B cell (primary cell): ENCODE measurements at regions of chr1 and their contacts with region 1.

Region 1: GRCh38 chr1:109906160-109906838 is 4.3 kb upstream of the CSF1 start:
- DNase-seq: peak; percentile 84
- ATAC-seq: peak; percentile 89
- H3K4me3 ChIP-seq: peak overlapping the region in 2 of 5 experiments; percentile 17 to 19
- H3K4me3 Mint-ChIP-seq: peak overlapping the region; percentile 74
- H3K27ac ChIP-seq: no peak overlapping the region
- H3K27ac Mint-ChIP-seq: peak overlapping the region; percentile 88
- H3K4me1 ChIP-seq: peaks cover 27 to 34% of the 10 kb centered on the region in 2 donors
- H3K4me1 Mint-ChIP-seq: peaks cover 45% of the 10 kb centered on the region
- H3K27me3 ChIP-seq: peaks cover 0 to 69% (median 42%) of the 10 kb centered on the region in 4 experiments
- H3K27me3 Mint-ChIP-seq: peaks cover 60% of the 10 kb centered on the region
- CTCF ChIP-seq: no peak

Region 2: GRCh38 chr1:109877320-109877771 is 29.0 kb before region 1 on chr1:
- CTCF ChIA-PET with region 1: no interaction called
- POLR2A ChIA-PET with region 1: no interaction called
- intact Hi-C with region 1: loop called (anchors 2 kb)
- DNase-seq: no peak
- ATAC-seq: peak; percentile 34
- H3K4me3 ChIP-seq: no peak overlapping the region
- H3K4me3 Mint-ChIP-seq: peak overlapping the region; percentile 34
- H3K27ac ChIP-seq: no peak overlapping the region
- H3K27ac Mint-ChIP-seq: peak overlapping the region; percentile 70
- H3K4me1 ChIP-seq: peaks cover 20% of the 10 kb centered on the region in 2 donors
- H3K4me1 Mint-ChIP-seq: peaks cover 20% of the 10 kb centered on the region
- H3K27me3 ChIP-seq: peaks cover 0 to 23% (median 11%) of the 10 kb centered on the region in 4 experiments
- H3K27me3 Mint-ChIP-seq: peaks cover 28% of the 10 kb centered on the region
- CTCF ChIP-seq: no peak

Region 3: DNA sequence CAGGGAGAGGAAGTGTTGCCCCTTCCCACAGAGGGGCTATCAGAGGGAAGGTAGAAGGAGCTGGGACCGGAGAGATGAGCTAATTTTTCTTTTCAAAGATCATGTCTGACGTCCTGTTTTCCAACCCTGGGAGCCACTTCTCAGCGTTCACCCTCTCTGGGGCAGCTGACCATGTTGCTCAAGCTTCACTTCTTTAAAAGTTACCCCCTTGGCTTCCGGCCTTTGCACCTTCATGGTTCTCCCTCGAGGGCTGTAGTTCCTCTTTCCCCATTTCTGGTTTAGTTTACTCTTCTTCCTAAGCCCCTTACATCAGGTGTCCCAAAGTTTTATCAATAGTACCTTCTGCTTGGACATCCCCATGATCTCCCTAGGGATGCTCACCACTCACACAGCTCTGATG is 19.5 kb before region 1 on chr1:
- CTCF ChIA-PET with region 1: interaction called, 5 read pairs
- POLR2A ChIA-PET with region 1: interaction called, 3 read pairs
- intact Hi-C with region 1: loop called (anchors 1 kb)
- DNase-seq: peak; percentile 83
- ATAC-seq: peak; percentile 89
- H3K4me3 ChIP-seq: peak overlapping the region in 3 of 5 experiments; percentile 16 to 49 (median 17)
- H3K4me3 Mint-ChIP-seq: peak overlapping the region; percentile 70
- H3K27ac ChIP-seq: peak overlapping the region; percentile 74
- H3K27ac Mint-ChIP-seq: peak overlapping the region; percentile 93
- H3K4me1 ChIP-seq: peaks cover 34 to 41% of the 10 kb centered on the region in 2 donors
- H3K4me1 Mint-ChIP-seq: peaks cover 55% of the 10 kb centered on the region
- H3K27me3 ChIP-seq: peaks cover 0 to 15% (median 0%) of the 10 kb centered on the region in 4 experiments
- H3K27me3 Mint-ChIP-seq: peaks cover 7% of the 10 kb centered on the region
- CTCF ChIP-seq: no peak

Region 4: GRCh38 chr1:110011527-110012041 is 105.3 kb after region 1 on chr1:
- CTCF ChIA-PET with region 1: interaction called, 4 read pairs
- POLR2A ChIA-PET with region 1: no interaction called
- intact Hi-C with region 1: loop called (anchors 1 kb)
- DNase-seq: peak; percentile 92
- ATAC-seq: peak; percentile 93
- H3K4me3 ChIP-seq: peak overlapping the region in 3 of 5 experiments; percentile 29 to 37 (median 34)
- H3K4me3 Mint-ChIP-seq: peak overlapping the region; percentile 82
- H3K27ac ChIP-seq: peak overlapping the region; percentile 93 to 94
- H3K27ac Mint-ChIP-seq: peak overlapping the region; percentile 98
- H3K4me1 ChIP-seq: peaks cover 25 to 27% of the 10 kb centered on the region in 2 donors
- H3K4me1 Mint-ChIP-seq: peaks cover 33% of the 10 kb centered on the region
- H3K27me3 ChIP-seq: no peaks in the 10 kb centered on the region
- H3K27me3 Mint-ChIP-seq: no peaks in the 10 kb centered on the region
- CTCF ChIP-seq: peak; percentile 79